PC-9 (cell line): ENCODE measurements at regions of chr1 and their contacts with region 1.

Region 1: DNA sequence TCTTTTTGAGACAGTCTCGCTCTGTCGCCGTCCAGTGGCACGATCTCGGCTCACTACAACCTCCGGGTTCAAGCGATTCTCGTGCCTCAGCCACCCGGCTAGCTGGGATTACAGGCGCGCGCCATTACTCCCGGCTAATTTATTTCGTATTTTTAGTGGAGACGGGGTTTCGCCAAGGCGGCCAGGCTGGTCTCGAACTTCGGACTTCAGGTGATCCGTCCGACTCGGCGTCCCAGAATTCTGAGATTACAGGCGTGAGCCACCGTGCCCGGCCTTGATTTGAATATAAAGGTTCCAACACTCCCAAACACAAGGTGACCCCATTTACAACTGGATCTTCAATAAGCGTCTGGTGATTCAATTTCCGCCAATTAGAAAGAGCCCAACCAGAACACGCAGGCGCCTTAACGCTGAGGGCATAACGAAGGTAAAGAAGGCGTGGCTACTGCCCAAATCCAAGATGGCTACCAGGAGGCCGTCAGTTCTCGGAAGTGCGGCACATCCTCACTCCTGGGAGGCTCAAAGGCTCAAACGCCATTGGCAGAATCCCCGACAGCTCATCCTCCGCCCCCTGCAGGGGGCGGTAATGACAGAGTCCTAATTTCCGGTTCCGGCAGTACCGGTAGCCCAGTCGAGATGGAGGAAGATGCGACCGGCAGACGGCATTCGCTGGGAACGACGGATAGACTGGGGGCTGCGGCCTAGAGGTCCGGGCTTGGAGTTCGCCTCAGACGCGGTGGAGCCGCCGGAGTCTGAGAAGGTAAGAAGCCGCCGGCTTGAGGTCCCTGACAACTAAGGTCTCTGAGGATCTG is at the start of gene SLC25A44:
- DNase-seq: peak; percentile 97
- H3K4me3 ChIP-seq: peak within 1 kb of the TSS; percentile 95
- H3K27ac ChIP-seq: peak within 1 kb of the TSS; percentile 72
- H3K4me1 ChIP-seq: peaks cover 12% of the 10 kb centered on the region
- H3K27me3 ChIP-seq: no peaks in the 10 kb centered on the region
- CTCF ChIP-seq: peak; percentile 73
- total RNA-seq, gene SLC25A44: 12.7 and 20.2 TPM in 2 replicates

Region 2: GRCh38 chr1:156212833-156213643 is 19.3 kb after region 1 on chr1 and contains the start of gene PMF1:
- CTCF ChIA-PET with region 1: no interaction called
- POLR2A ChIA-PET with region 1: interaction called, 17 read pairs
- intact Hi-C with region 1: no loop called
- DNase-seq: peak; percentile 90 to 95
- H3K4me3 ChIP-seq: peak within 1 kb of the TSS; percentile 67
- H3K27ac ChIP-seq: peak within 1 kb of the TSS; percentile 82
- H3K4me1 ChIP-seq: peaks cover 22% of the 10 kb centered on the region
- H3K27me3 ChIP-seq: no peaks in the 10 kb centered on the region
- CTCF ChIP-seq: no peak
- total RNA-seq, gene PMF1: 46.0 and 50.2 TPM in 2 replicates